ENCODE measurements at regions of chr2 and their contacts with region 1.

Region 1: GRCh38 chr2:66957198-66957597 is 439.9 kb upstream of the ETAA1 start:
- DNase-seq: no peak
- ATAC-seq: no peak
- H3K4me3 ChIP-seq: no peak overlapping the region
- H3K27ac ChIP-seq: no peak overlapping the region
- H3K4me1 ChIP-seq: no peaks in the 10 kb centered on the region
- H3K27me3 ChIP-seq: no peaks in the 10 kb centered on the region
- CTCF ChIP-seq: no peak

Region 2: GRCh38 chr2:65630643-65631042 is 1326.6 kb before region 1 on chr2:
- intact Hi-C with region 1: loop called in 1 of 10 experiments (anchors 10 kb)
- DNase-seq: no peak
- ATAC-seq: no peak
- H3K4me3 ChIP-seq: no peak overlapping the region
- H3K27ac ChIP-seq: no peak overlapping the region
- H3K4me1 ChIP-seq: no peaks in the 10 kb centered on the region
- H3K27me3 ChIP-seq: peaks cover 0 to 6% (median 0%) of the 10 kb centered on the region in 7 donors
- CTCF ChIP-seq: no peak

Measured in heart right ventricle (tissue), 16 donors.